ENCODE measurements at regions of chr4 and their contacts with region 1.

Region 1: GRCh38 chr4:183987987-183988392 is 82.9 kb downstream of the STOX2 start:
- DNase-seq: peak; percentile 28

Region 2: GRCh38 chr4:183554878-183555585 is 433.0 kb before region 1 on chr4:
- CTCF ChIA-PET with region 1: no interaction called
- POLR2A ChIA-PET with region 1: no interaction called
- DNase-seq: no peak

Region 3: GRCh38 chr4:183905081-183905592 is 82.9 kb before region 1 on chr4 and contains the start of gene STOX2:
- CTCF ChIA-PET with region 1: no interaction called
- POLR2A ChIA-PET with region 1: interaction called, 20 read pairs
- DNase-seq: peak; percentile 62

Region 4: DNA sequence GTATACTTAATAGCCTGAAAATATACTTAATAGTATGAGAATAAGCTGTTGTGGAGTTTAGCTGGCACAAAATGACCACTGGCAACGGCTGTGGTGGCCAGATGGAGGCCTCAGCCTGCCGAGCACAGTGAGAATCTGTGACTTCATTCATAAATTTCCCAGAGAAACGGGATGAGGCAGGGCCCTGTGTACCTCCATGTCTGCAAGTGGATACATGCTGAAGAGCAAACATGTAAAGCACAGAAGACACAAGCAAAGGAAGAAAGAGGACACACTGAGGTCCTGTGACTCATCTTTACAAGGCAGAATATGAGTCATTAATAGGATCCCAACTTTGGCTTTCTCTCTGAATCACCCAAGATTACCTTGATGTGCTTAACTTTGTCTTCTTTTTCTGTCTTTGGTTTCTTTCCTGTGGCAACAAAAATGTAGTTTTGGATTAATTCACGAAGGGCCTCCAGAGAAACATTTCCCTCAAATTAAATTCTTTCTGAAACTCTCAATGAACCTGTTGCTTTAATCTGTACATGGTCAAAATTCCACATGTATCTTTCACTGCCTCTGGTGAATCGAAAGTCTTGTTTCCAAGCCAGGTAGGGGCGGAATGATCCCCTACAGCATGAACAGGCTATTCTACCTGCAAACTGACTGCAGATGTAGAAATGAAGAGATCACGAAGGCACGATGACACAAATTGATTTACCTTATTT is 430.0 kb after region 1 on chr4:
- CTCF ChIA-PET with region 1: no interaction called
- POLR2A ChIA-PET with region 1: no interaction called
- DNase-seq: no peak